Right cardiac atrium (tissue), 5 donors: ENCODE measurements at regions of chr16 and their contacts with region 1.

Region 1: GRCh38 chr16:69888005-69888590 is 63.0 kb upstream of the CLEC18A start:
- DNase-seq: no peak
- ATAC-seq: no peak
- H3K4me3 ChIP-seq: no peak overlapping the region
- H3K27ac ChIP-seq: no peak overlapping the region
- H3K4me1 ChIP-seq: peaks cover 4% of the 10 kb centered on the region
- H3K27me3 ChIP-seq: no peaks in the 10 kb centered on the region

Region 2: GRCh38 chr16:69691980-69692911 is 195.9 kb before region 1 on chr16:
- intact Hi-C with region 1: no loop called
- DNase-seq: no peak
- ATAC-seq: peak; percentile 16 to 42
- H3K4me3 ChIP-seq: no peak overlapping the region
- H3K27ac ChIP-seq: peak overlapping the region; percentile 13
- H3K4me1 ChIP-seq: no peaks in the 10 kb centered on the region
- H3K27me3 ChIP-seq: no peaks in the 10 kb centered on the region

Region 3: DNA sequence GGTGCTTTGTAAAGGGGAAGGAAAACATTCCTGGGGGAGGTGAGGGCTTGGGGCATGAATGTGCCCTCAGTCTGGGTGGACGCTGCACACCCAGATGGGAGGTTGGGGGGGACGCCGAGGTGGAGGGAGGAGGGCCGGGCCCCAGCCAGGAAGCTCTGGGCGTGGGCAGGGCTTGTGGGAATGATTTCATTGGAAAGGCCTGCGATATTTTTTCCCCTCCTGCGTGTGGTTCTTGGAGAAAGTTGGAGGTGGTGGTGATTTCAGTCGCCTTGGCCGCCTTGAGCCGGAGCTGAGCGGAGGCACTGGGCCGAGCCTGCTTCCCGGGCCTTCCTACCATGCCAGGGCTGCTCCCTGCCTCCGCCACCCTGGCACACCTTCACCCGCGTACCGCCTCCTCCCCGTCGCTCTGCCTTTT is 36.7 kb after region 1 on chr16:
- intact Hi-C with region 1: loop called in 1 of 4 experiments (anchors 5 kb)
- DNase-seq: peak; percentile 84 to 92 (median 92)
- ATAC-seq: peak; percentile 89 to 94
- H3K4me3 ChIP-seq: peak overlapping the region; percentile 12
- H3K27ac ChIP-seq: peak overlapping the region; percentile 77
- H3K4me1 ChIP-seq: peaks cover 9% of the 10 kb centered on the region
- H3K27me3 ChIP-seq: no peaks in the 10 kb centered on the region

Region 4: DNA sequence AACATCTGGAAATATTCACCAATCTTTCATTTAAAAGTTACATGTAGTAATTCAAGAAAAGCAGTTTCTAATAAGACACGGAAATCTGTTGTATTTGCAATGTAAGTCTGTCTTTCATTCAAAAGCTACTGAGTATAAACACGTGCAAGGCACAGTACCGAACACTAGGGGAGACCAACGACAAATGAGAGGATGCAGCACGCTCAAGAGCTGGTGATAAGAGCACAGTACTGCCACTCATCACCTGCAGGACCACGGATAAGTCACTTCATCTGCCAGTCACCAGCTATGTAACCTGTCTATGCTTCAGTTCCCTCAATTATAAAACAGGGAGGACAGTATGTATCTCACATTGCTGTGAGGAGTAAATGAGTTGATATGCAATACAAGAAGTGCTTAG is 130.2 kb after region 1 on chr16:
- intact Hi-C with region 1: no loop called
- DNase-seq: no peak
- ATAC-seq: peak; percentile 76 to 85
- H3K4me3 ChIP-seq: no peak overlapping the region
- H3K27ac ChIP-seq: no peak overlapping the region
- H3K4me1 ChIP-seq: no peaks in the 10 kb centered on the region
- H3K27me3 ChIP-seq: no peaks in the 10 kb centered on the region